ENCODE measurements at regions of chr11 and their contacts with region 1.

Region 1: GRCh38 chr11:102109896-102110760 is at the start of gene YAP1:
- DNase-seq: peak; percentile 90 to 94 (median 91)
- H3K4me3 ChIP-seq: peak within 1 kb of the TSS; percentile 89
- H3K27ac ChIP-seq: peak within 1 kb of the TSS; percentile 99
- H3K4me1 ChIP-seq: peaks cover 4% of the 10 kb centered on the region
- H3K27me3 ChIP-seq: no peaks in the 10 kb centered on the region
- CTCF ChIP-seq: peak in 2 of 3 donors; percentile 24 to 26
- EP300 ChIP-seq: peak; percentile 48
- POLR2A ChIP-seq: peak; percentile 66
- total RNA-seq, gene YAP1: 104 to 184 (median 147) TPM

Region 2: GRCh38 chr11:101199416-101199815 is 910.7 kb before region 1 on chr11:
- intact Hi-C with region 1: no loop called
- DNase-seq: no peak
- H3K4me3 ChIP-seq: no peak overlapping the region
- H3K27ac ChIP-seq: no peak overlapping the region
- H3K4me1 ChIP-seq: no peaks in the 10 kb centered on the region
- H3K27me3 ChIP-seq: no peaks in the 10 kb centered on the region
- CTCF ChIP-seq: no peak
- EP300 ChIP-seq: no peak
- POLR2A ChIP-seq: no peak

Region 3: DNA sequence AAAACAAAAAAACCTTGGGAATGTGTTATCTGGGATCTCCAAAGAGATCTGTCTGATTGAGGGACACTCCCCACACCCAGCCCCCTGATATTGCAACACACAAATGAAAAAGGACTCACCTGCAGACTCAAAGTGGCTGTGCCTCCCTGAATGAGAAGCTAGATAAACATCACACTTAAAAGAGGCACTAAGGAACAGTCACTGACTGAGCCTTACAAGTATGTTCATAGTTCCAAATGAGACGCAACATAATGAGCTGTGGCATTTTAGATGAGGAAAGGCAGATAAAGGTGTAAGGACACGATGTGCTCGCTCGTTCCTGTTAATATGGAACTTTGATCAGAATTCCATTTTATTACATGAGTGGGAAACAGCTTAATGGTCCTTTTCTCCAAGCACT is 83.9 kb before region 1 on chr11:
- intact Hi-C with region 1: no loop called
- DNase-seq: no peak
- H3K4me3 ChIP-seq: no peak overlapping the region
- H3K27ac ChIP-seq: no peak overlapping the region
- H3K4me1 ChIP-seq: no peaks in the 10 kb centered on the region
- H3K27me3 ChIP-seq: no peaks in the 10 kb centered on the region
- CTCF ChIP-seq: no peak
- EP300 ChIP-seq: no peak
- POLR2A ChIP-seq: no peak

Region 4: DNA sequence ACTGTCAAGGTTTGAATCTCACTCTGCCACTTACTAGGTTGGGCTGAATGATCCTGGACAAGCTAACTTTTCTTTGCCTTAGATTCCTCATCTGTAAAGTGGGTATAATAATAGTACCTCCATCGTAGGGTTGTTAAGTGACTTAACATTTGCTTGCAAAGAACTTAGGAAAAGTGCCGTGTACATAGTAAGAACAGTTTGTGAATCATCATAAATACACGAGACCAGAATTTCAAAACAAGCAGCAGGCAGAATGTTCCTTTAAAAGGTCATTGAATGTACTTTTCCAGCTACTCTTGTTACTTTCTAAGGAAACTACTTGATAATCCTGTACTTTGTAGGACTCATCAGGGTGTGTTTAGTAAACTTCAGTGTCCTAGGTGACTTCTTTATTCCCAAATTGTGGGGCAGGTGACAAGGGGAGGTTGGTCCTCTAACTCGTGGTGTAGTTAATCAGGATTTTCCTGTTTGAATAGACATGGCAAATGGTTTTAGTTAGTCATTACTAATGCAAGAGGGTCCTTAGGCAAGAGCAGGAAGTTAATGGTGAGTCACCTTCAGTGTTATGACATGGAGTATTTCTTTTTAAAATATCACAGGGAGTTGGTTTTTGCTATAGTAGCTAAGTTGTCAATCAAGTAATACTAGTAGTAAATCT is 68.0 kb after region 1 on chr11:
- intact Hi-C with region 1: loop called in 2 of 4 experiments (anchors 2 to 10 kb)
- DNase-seq: peak in 1 of 5 donors; percentile 37
- H3K4me3 ChIP-seq: no peak overlapping the region
- H3K27ac ChIP-seq: peak overlapping the region in 1 of 2 donors; percentile 41
- H3K4me1 ChIP-seq: peaks cover 3% of the 10 kb centered on the region
- H3K27me3 ChIP-seq: no peaks in the 10 kb centered on the region
- CTCF ChIP-seq: no peak
- EP300 ChIP-seq: peak; percentile 44
- POLR2A ChIP-seq: no peak

Region 5: DNA sequence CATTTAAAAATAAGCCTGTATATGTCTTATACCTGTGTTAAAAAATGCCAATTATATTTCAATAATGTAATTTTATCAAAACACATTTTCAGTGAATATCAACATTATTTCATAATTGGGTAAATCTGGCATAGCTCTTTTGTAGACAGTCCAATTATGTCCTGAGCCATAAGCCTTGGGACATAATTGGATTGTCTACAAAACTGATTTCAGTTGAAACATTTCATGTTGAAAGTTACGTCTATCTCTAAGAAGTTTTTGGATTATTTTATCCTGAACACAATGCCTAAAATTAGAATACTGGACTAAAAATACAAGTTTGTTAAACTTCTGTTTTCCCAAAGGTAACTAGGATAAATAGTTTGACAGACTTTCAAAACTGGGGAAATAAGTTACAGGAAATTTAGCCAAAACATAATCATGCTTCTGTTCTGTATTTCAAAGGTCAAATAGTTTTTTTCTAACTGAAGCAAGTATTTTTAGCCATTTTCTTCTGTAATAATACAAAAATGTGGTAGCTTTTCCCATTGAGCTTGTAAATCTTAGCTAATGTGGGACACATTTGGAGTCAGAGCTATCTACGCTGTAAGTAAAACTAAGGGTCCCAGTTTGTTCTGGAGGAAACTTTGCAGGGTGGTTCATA is 106.4 kb after region 1 on chr11:
- intact Hi-C with region 1: loop called in 1 of 4 experiments (anchors 10 kb)
- DNase-seq: no peak
- H3K4me3 ChIP-seq: no peak overlapping the region
- H3K27ac ChIP-seq: peak overlapping the region in 1 of 2 donors; percentile 41
- H3K4me1 ChIP-seq: peaks cover 7% of the 10 kb centered on the region
- H3K27me3 ChIP-seq: no peaks in the 10 kb centered on the region
- CTCF ChIP-seq: no peak
- EP300 ChIP-seq: no peak
- POLR2A ChIP-seq: no peak

Region 6: GRCh38 chr11:102244681-102245409 is 134.7 kb after region 1 on chr11:
- intact Hi-C with region 1: no loop called
- DNase-seq: no peak
- H3K4me3 ChIP-seq: no peak overlapping the region
- H3K27ac ChIP-seq: no peak overlapping the region
- H3K4me1 ChIP-seq: peaks cover 1% of the 10 kb centered on the region
- H3K27me3 ChIP-seq: no peaks in the 10 kb centered on the region
- CTCF ChIP-seq: no peak
- EP300 ChIP-seq: no peak
- POLR2A ChIP-seq: no peak

Region 7: GRCh38 chr11:102268329-102269193 is 158.4 kb after region 1 on chr11:
- intact Hi-C with region 1: loop called in 2 of 4 experiments (anchors 10 kb)
- DNase-seq: peak; percentile 80 to 89 (median 85)
- H3K4me3 ChIP-seq: peak overlapping the region; percentile 28
- H3K27ac ChIP-seq: no peak overlapping the region
- H3K4me1 ChIP-seq: no peaks in the 10 kb centered on the region
- H3K27me3 ChIP-seq: no peaks in the 10 kb centered on the region
- CTCF ChIP-seq: peak; percentile 16 to 54 (median 46)
- EP300 ChIP-seq: no peak
- POLR2A ChIP-seq: peak; percentile 30

Region 8: GRCh38 chr11:102287964-102288724 is 178.0 kb after region 1 on chr11:
- intact Hi-C with region 1: loop called in 1 of 4 experiments (anchors 10 kb)
- DNase-seq: peak in 4 of 5 donors; percentile 38 to 51 (median 47)
- H3K4me3 ChIP-seq: peak overlapping the region; percentile 21
- H3K27ac ChIP-seq: peak overlapping the region in 1 of 2 donors; percentile 5
- H3K4me1 ChIP-seq: peaks cover 9% of the 10 kb centered on the region
- H3K27me3 ChIP-seq: no peaks in the 10 kb centered on the region
- CTCF ChIP-seq: peak; percentile 60 to 73 (median 66)
- EP300 ChIP-seq: no peak
- POLR2A ChIP-seq: no peak

Measured in ovary (tissue), 10 donors.